ENCODE measurements at regions of chr7 and their contacts with region 1.

Region 1: GRCh38 chr7:36440880-36441279 is 51.2 kb downstream of the ANLN start:
- DNase-seq: no peak
- CTCF ChIP-seq: no peak

Region 2: GRCh38 chr7:36366718-36367560 is 73.9 kb before region 1 on chr7:
- CTCF ChIA-PET with region 1: no interaction called
- POLR2A ChIA-PET with region 1: no interaction called
- DNase-seq: peak; percentile 95
- CTCF ChIP-seq: peak; percentile 91

Region 3: GRCh38 chr7:36430186-36430585 is 10.7 kb before region 1 on chr7:
- CTCF ChIA-PET with region 1: interaction called, 12 read pairs
- POLR2A ChIA-PET with region 1: no interaction called
- DNase-seq: no peak
- CTCF ChIP-seq: no peak

Region 4: DNA sequence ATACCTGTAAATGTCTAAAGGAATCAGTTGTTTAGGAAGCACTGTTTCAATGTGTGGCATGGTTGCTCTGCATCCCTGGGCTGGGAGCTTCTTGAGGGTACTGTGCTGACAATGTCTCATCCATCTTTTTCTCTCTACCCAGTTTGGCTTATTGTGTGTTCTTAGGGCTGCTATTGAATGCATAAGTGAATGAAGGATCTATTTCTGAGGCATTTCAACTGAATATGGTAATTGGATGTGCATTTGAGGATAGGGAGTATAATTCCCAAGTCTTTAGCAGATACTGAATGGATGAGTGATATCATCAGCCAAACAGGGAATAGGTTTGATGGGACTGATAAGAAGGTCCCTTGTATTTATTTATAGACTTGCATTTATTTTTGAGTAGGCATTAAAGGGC is 12.9 kb after region 1 on chr7:
- CTCF ChIA-PET with region 1: interaction called, 12 read pairs
- POLR2A ChIA-PET with region 1: no interaction called
- DNase-seq: no peak
- CTCF ChIP-seq: no peak